Adrenal gland (tissue), 19 donors: ENCODE measurements at regions of chr2 and their contacts with region 1.

Region 1: DNA sequence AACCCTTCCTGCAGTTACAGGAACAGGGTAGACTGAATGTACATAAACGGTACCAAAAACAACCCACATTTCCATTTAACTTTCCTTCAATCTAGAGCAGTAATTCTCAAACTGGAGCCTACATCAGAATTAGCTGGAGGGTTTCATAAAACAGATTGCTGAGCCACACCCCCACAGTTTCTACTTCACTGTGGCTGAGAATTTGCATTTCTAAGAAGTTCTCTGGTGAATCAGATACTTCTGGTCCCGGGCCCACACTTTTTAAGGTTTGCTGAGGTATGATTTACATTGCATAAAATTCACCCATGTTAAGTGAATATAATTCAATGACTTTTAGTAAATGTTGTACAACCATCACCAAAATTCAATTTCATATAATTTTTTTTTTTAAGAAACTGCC is 113.7 kb downstream of the SRBD1 start:
- DNase-seq: no peak
- H3K4me3 ChIP-seq: no peak overlapping the region
- H3K27ac ChIP-seq: no peak overlapping the region
- H3K4me1 ChIP-seq: no peaks in the 10 kb centered on the region
- H3K27me3 ChIP-seq: no peaks in the 10 kb centered on the region
- CTCF ChIP-seq: no peak
- POLR2A ChIP-seq: no peak

Region 2: DNA sequence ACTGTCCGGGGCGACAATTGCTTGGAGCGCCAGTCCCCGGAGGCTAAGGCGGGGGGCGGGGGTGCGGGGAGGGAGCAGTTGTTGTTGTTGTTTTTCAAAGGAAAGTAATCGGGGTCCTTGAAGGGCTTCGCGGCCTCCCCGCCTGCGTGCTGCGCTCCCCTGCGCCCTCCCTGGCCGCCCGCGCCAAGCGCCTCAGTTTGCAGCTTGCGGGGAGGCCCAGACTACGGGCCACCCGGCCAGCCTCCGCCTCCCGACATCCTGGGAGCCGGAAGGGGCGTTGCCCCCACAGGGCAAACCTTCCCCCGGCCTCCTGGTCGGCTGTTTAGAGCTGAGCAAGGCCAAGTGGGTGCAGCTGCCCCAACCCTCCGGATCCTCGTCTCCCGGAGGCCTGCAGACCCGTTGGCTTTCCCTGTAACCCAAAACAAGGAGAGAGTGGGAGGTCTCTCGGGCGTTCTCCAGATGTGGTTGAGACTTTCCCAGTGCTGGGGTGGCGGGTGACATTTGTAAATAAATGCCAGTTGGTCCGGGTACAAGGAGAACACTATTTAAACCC is 559.6 kb before region 1 on chr2:
- intact Hi-C with region 1: no loop called
- DNase-seq: no peak
- H3K4me3 ChIP-seq: no peak overlapping the region
- H3K27ac ChIP-seq: no peak overlapping the region
- H3K4me1 ChIP-seq: peaks cover 7 to 24% of the 10 kb centered on the region in 2 donors
- H3K27me3 ChIP-seq: peaks cover 90% of the 10 kb centered on the region
- CTCF ChIP-seq: no peak
- POLR2A ChIP-seq: no peak

Region 3: GRCh38 chr2:44975571-44976450 is 521.5 kb before region 1 on chr2:
- intact Hi-C with region 1: loop called (anchors 2 to 5 kb)
- DNase-seq: no peak
- H3K4me3 ChIP-seq: no peak overlapping the region
- H3K27ac ChIP-seq: no peak overlapping the region
- H3K4me1 ChIP-seq: no peaks in the 10 kb centered on the region
- H3K27me3 ChIP-seq: peaks cover 30% of the 10 kb centered on the region
- CTCF ChIP-seq: no peak
- POLR2A ChIP-seq: no peak

Region 4: GRCh38 chr2:44981136-44982108 is 515.9 kb before region 1 on chr2:
- intact Hi-C with region 1: loop called (anchors 2 to 5 kb)
- DNase-seq: peak; percentile 56 to 88 (median 76)
- H3K4me3 ChIP-seq: no peak overlapping the region
- H3K27ac ChIP-seq: no peak overlapping the region
- H3K4me1 ChIP-seq: no peaks in the 10 kb centered on the region
- H3K27me3 ChIP-seq: peaks cover 7% of the 10 kb centered on the region
- CTCF ChIP-seq: peak; percentile 72 to 85 (median 82)
- POLR2A ChIP-seq: no peak